GM12878 (cell line): ENCODE measurements at regions of chr6 and their contacts with region 1.

Region 1: DNA sequence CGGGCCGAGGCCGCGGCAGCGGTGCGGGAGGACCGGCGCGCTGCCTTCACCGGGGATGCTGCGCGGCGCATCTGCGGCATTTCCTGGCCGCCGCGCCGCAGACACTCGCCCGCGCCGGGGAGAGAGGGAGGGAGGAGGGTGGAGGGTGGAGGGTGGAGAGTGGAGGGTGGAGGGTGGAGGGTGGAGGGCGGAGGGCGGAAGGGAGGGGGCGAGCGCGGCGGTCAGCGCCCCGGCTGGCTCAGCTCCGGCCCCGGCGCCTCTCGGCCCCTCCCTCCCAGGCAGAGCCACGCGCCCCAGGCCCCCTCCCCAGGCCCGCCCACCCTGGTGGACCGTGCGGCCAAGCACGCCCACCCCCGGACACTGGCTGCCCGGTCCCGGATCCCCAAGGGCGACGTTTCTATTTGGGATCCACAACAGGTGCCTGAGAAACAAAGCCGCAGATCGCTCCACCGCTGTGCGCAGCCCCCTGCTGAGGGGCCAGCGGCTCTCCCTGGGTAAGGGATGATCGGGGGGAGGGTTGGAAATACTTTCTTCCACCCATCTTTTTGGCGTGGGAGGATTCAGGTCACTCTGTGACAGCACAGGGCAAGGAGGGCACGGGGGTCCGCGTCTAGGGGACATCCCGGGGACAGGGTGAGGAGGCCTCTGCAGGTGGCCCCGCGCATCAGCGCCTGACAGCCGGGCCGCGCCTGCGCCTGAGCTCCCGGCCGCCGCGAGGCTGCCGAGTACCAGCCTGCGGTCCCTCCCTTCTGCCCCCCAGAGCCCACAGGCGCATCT is 111.1 kb upstream of the BEND6 start:
- DNase-seq: peak; percentile 66
- ATAC-seq: peak; percentile 91
- H3K4me3 ChIP-seq: peak overlapping the region; percentile 95
- H3K27ac ChIP-seq: peak overlapping the region; percentile 82
- H3K4me1 ChIP-seq: peaks cover 45% of the 10 kb centered on the region
- H3K27me3 ChIP-seq: no peaks in the 10 kb centered on the region
- CTCF ChIP-seq: peak; percentile 66 to 70 (median 70); a peak in 5 of 6 replicates
- EP300 ChIP-seq: no peak
- POLR2A ChIP-seq: peak; percentile 71
- RAD21 ChIP-seq: peak; percentile 67

Region 2: GRCh38 chr6:56757588-56757984 is 86.2 kb before region 1 on chr6:
- CTCF ChIA-PET with region 1: interaction called, 494 read pairs
- POLR2A ChIA-PET with region 1: interaction called, 5 read pairs
- RAD21 ChIA-PET with region 1: interaction called, 450 read pairs
- SMC1A ChIA-PET with region 1: interaction called, 358 read pairs
- in situ Hi-C with region 1: no loop called
- intact Hi-C with region 1: no loop called
- DNase-seq: no peak
- ATAC-seq: peak; percentile 52
- H3K4me3 ChIP-seq: no peak overlapping the region
- H3K27ac ChIP-seq: peak overlapping the region; percentile 54
- H3K4me1 ChIP-seq: peaks cover 76% of the 10 kb centered on the region
- H3K27me3 ChIP-seq: no peaks in the 10 kb centered on the region
- CTCF ChIP-seq: peak; percentile 42 to 49 (median 43); a peak in 5 of 6 replicates
- EP300 ChIP-seq: no peak
- POLR2A ChIP-seq: no peak
- RAD21 ChIP-seq: peak; percentile 75

Region 3: DNA sequence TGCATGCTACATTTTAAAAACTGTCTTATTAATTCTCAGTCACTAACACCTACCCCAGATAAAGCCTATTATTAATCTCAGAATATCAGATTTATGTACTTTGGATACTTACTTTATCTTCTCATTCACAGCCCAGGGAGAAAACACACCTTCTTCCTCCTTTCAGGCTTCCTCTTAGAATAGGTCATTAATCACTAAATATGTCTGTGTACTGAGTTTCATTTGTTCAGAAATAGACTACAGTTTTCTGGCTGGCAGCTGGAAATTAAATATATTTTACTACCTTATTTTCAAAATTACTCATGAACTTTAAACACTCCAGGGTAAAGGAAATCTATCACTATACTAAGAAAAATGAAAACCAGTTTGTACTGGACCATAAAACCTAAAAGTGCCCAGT is 53.3 kb before region 1 on chr6:
- CTCF ChIA-PET with region 1: interaction called, 4 read pairs
- POLR2A ChIA-PET with region 1: interaction called, 4 read pairs
- RAD21 ChIA-PET with region 1: interaction called, 8 read pairs
- SMC1A ChIA-PET with region 1: interaction called, 13 read pairs
- in situ Hi-C with region 1: no loop called
- intact Hi-C with region 1: loop called (anchors 5 kb)
- DNase-seq: no peak
- ATAC-seq: peak; percentile 72
- H3K4me3 ChIP-seq: no peak overlapping the region
- H3K27ac ChIP-seq: peak overlapping the region; percentile 82
- H3K4me1 ChIP-seq: peaks cover 41% of the 10 kb centered on the region
- H3K27me3 ChIP-seq: no peaks in the 10 kb centered on the region
- CTCF ChIP-seq: no peak
- EP300 ChIP-seq: peak in 1 of 2 experiments; percentile 65; a peak in 1 of 4 replicates
- POLR2A ChIP-seq: no peak
- RAD21 ChIP-seq: no peak

Region 4: GRCh38 chr6:56802584-56802983 is 41.2 kb before region 1 on chr6:
- CTCF ChIA-PET with region 1: interaction called, 4 read pairs
- POLR2A ChIA-PET with region 1: interaction called, 4 read pairs
- RAD21 ChIA-PET with region 1: interaction called, 7 read pairs
- SMC1A ChIA-PET with region 1: interaction called, 12 read pairs
- in situ Hi-C with region 1: no loop called
- intact Hi-C with region 1: loop called (anchors 5 kb)
- DNase-seq: no peak
- ATAC-seq: no peak
- H3K4me3 ChIP-seq: no peak overlapping the region
- H3K27ac ChIP-seq: no peak overlapping the region
- H3K4me1 ChIP-seq: peaks cover 19% of the 10 kb centered on the region; the same call in 1 of the 2 replicates
- H3K27me3 ChIP-seq: no peaks in the 10 kb centered on the region
- CTCF ChIP-seq: no peak
- EP300 ChIP-seq: no peak
- POLR2A ChIP-seq: no peak
- RAD21 ChIP-seq: no peak

Region 5: GRCh38 chr6:56821005-56821432 is 22.7 kb before region 1 on chr6:
- CTCF ChIA-PET with region 1: interaction called, 10 read pairs
- POLR2A ChIA-PET with region 1: interaction called, 6 read pairs
- RAD21 ChIA-PET with region 1: interaction called, 6 read pairs
- SMC1A ChIA-PET with region 1: interaction called, 38 read pairs
- in situ Hi-C with region 1: no loop called
- intact Hi-C with region 1: no loop called
- DNase-seq: no peak
- ATAC-seq: peak; percentile 47
- H3K4me3 ChIP-seq: no peak overlapping the region
- H3K27ac ChIP-seq: no peak overlapping the region
- H3K4me1 ChIP-seq: peaks cover 6% of the 10 kb centered on the region; the same call in 1 of the 2 replicates
- H3K27me3 ChIP-seq: no peaks in the 10 kb centered on the region
- CTCF ChIP-seq: no peak
- EP300 ChIP-seq: no peak
- POLR2A ChIP-seq: no peak
- RAD21 ChIP-seq: no peak

Region 6: GRCh38 chr6:57068066-57068465 is 224.3 kb after region 1 on chr6:
- CTCF ChIA-PET with region 1: no interaction called
- POLR2A ChIA-PET with region 1: no interaction called
- RAD21 ChIA-PET with region 1: no interaction called
- SMC1A ChIA-PET with region 1: no interaction called
- in situ Hi-C with region 1: no loop called
- intact Hi-C with region 1: no loop called
- DNase-seq: no peak
- ATAC-seq: no peak
- H3K4me3 ChIP-seq: no peak overlapping the region
- H3K27ac ChIP-seq: no peak overlapping the region
- H3K4me1 ChIP-seq: no peaks in the 10 kb centered on the region
- H3K27me3 ChIP-seq: no peaks in the 10 kb centered on the region
- CTCF ChIP-seq: no peak
- EP300 ChIP-seq: no peak
- POLR2A ChIP-seq: no peak
- RAD21 ChIP-seq: no peak